ENCODE measurements at regions of chr2 and their contacts with region 1.

Region 1: GRCh38 chr2:180325416-180326120 is 318.5 kb upstream of the CWC22 start:
- DNase-seq: no peak
- H3K4me3 ChIP-seq: no peak overlapping the region
- H3K27ac ChIP-seq: no peak overlapping the region
- H3K4me1 ChIP-seq: no peaks in the 10 kb centered on the region
- H3K27me3 ChIP-seq: no peaks in the 10 kb centered on the region
- CTCF ChIP-seq: no peak
- EP300 ChIP-seq: no peak
- POLR2A ChIP-seq: no peak

Region 2: GRCh38 chr2:180924063-180924462 is 598.5 kb after region 1 on chr2:
- intact Hi-C with region 1: loop called in 1 of 4 experiments (anchors 5 kb)
- DNase-seq: no peak
- H3K4me3 ChIP-seq: no peak overlapping the region
- H3K27ac ChIP-seq: no peak overlapping the region
- H3K4me1 ChIP-seq: no peaks in the 10 kb centered on the region
- H3K27me3 ChIP-seq: no peaks in the 10 kb centered on the region
- CTCF ChIP-seq: no peak
- EP300 ChIP-seq: no peak
- POLR2A ChIP-seq: no peak

Region 3: GRCh38 chr2:181646415-181646987 is 1320.9 kb after region 1 on chr2:
- intact Hi-C with region 1: no loop called
- DNase-seq: no peak
- H3K4me3 ChIP-seq: no peak overlapping the region
- H3K27ac ChIP-seq: no peak overlapping the region
- H3K4me1 ChIP-seq: no peaks in the 10 kb centered on the region
- H3K27me3 ChIP-seq: no peaks in the 10 kb centered on the region
- CTCF ChIP-seq: no peak
- EP300 ChIP-seq: no peak
- POLR2A ChIP-seq: no peak

Measured in ovary (tissue), 10 donors.